Activated T-helper 1 cell treated with anti-CD3 and anti-CD28 coated beads, Interleukin-12 subunit alpha, Interleukin-12 subunit beta, Interleukin-2, Interleukin-4 antibody, amounts not matched to agents 30 ng/mL and 10 ng/mL and 1 ng/mL, durations not matched to agents 14 hours and 24 hours and 36 hours (primary cell): ENCODE measurements at regions of chr5 and their contacts with region 1.

Region 1: DNA sequence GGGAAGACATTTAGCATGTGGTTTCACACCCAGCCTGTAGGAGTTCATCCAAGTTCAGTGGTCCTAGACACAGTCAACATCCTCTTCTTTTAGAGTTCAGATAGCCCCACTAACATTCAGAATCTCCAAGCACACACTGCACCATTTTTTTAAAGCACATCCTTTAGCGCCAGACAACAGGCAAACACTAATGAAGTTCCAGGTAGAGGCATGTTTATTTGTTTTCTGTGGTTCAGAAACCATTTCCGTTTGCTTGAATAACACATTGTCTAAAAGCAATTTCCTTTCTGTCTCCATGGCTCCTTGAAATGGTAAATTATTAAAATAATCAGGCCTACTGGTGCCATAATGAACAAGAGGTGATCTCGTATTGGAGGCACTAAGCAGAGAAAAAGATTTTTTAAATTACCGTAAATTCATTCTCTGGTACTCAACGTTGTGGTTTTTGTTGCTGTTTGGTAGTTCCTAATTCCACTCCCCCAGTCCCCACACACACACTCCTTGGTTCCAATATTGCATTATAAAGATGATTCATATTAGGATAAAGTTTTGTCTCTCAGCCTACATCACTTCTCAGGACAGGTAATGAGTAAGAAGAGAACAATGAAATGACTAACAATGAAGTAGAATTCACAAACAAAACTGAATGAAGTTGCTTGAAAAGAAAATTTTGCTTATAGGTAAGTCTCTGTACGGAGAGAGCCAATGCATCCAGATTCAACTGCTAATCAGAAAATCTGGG is 153.1 kb downstream of the PCSK1 start:
- DNase-seq: peak; percentile 14
- H3K4me3 Mint-ChIP-seq: peak overlapping the region; percentile 27
- H3K27ac Mint-ChIP-seq: peak overlapping the region; percentile 56
- H3K4me1 Mint-ChIP-seq: peaks cover 40% of the 10 kb centered on the region
- H3K27me3 Mint-ChIP-seq: peaks cover 4% of the 10 kb centered on the region

Region 2: GRCh38 chr5:95858661-95859326 is 421.2 kb before region 1 on chr5:
- intact Hi-C with region 1: loop called (anchors 2 kb)
- DNase-seq: peak; percentile 84
- H3K4me3 Mint-ChIP-seq: peak overlapping the region; percentile 47
- H3K27ac Mint-ChIP-seq: peak overlapping the region; percentile 66
- H3K4me1 Mint-ChIP-seq: peaks cover 58% of the 10 kb centered on the region
- H3K27me3 Mint-ChIP-seq: no peaks in the 10 kb centered on the region

Region 3: DNA sequence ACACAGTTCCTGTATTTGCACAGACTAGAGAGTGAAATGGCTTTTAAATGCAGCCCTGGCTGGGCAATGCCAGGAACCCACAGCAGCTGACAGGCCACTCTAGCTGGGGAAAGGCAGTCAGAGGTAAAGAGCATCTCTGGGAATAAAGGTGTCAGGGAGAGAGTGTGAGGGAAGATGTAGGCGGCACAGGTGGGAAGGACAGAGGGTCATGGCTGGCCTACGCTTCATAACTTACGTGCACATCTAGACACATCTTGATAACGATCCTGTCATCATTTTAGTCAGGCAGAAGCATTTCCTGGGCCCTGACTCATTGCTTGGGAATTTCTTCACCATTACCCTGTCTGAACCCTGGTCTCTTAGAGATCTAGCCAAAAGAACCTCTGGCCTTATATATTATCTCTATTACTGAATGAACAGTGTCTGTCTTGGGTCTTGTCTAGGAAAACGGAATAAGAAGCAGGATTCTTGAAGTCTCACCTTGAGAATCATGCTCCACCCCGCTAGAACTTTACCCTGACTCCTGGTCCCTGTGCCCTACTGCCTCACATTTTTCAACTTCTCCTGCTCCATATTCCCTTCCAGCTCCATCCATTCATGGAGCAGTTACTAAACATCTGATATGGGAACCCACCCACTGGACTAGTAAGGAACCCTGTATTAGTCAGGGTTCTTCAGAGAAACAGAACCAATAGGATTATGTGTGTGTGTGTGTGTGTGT is 211.9 kb before region 1 on chr5:
- intact Hi-C with region 1: loop called (anchors 1 kb)
- DNase-seq: no peak
- H3K4me3 Mint-ChIP-seq: no peak overlapping the region
- H3K27ac Mint-ChIP-seq: peak overlapping the region; percentile 79
- H3K4me1 Mint-ChIP-seq: peaks cover 68% of the 10 kb centered on the region
- H3K27me3 Mint-ChIP-seq: no peaks in the 10 kb centered on the region

Region 4: DNA sequence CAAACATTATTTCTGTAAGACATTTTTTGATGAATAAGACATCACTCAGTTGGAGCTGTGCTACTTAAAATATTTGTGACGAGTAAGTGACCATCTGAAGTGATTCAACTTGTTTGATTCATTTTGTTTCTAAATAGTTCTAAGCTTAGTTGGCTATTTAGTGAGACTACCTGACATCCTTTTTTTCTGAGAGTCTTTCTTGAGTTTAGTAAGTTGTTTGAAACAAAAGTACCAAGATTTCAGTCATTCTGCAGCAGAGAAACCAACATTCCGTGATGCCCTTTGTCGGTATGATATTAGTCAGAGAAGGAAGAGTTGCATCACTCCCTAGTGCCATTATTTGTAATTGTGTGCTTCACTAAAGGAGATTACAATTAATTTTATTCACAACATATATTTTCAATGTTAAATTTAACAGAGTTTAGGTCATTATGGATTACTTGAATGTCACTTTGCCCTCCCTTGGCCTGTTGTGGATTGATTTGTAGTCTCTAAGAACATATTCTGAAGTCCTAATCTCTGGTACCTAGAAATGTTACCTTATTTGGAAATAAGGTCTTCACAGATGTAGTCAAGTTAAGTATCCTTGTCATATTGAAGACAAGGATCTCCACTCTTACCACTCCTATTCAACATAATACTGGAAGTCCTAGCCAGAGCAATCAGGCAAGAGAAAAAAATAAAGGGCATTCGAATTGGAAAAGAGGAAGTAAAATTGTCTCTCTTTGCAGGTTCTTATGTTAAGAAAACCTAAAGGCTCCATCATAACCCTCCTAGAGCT is 59.2 kb before region 1 on chr5:
- intact Hi-C with region 1: loop called (anchors 1 kb)
- DNase-seq: no peak
- H3K4me3 Mint-ChIP-seq: no peak overlapping the region
- H3K27ac Mint-ChIP-seq: peak overlapping the region; percentile 81
- H3K4me1 Mint-ChIP-seq: peaks cover 13% of the 10 kb centered on the region
- H3K27me3 Mint-ChIP-seq: peaks cover 1% of the 10 kb centered on the region

Region 5: GRCh38 chr5:96344678-96345577 is 65.0 kb after region 1 on chr5:
- intact Hi-C with region 1: loop called (anchors 1 kb)
- DNase-seq: no peak
- H3K4me3 Mint-ChIP-seq: no peak overlapping the region
- H3K27ac Mint-ChIP-seq: peak overlapping the region; percentile 1
- H3K4me1 Mint-ChIP-seq: peaks cover 22% of the 10 kb centered on the region
- H3K27me3 Mint-ChIP-seq: peaks cover 35% of the 10 kb centered on the region

Region 6: GRCh38 chr5:96657087-96657665 is 377.2 kb after region 1 on chr5:
- intact Hi-C with region 1: loop called (anchors 5 kb)
- DNase-seq: peak; percentile 59
- H3K4me3 Mint-ChIP-seq: peak overlapping the region; percentile 17
- H3K27ac Mint-ChIP-seq: peak overlapping the region; percentile 4
- H3K4me1 Mint-ChIP-seq: peaks cover 64% of the 10 kb centered on the region
- H3K27me3 Mint-ChIP-seq: peaks cover 43% of the 10 kb centered on the region